ENCODE measurements at regions of chr20 and their contacts with region 1.

Region 1: DNA sequence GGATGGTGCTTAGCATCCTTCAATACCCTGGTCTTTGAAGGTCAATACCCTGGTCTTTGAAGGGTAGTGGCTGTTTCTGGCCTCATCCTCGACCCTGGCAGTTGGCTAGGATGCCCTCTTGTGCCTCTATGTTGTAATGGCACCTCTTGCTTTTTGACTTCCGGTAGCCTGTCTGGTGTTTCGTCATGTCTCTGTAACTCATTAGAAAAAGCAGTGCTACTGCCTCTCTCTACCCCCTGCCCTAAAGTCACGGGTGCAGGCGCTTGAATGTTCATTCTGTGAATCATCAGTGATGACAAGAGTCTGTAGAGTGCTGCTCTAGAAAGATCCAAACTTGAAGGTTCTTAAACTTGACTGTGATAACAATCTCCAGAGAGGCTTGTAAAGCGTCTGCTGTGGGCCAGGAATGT is 28.3 kb downstream of the RSPO4 start:
- DNase-seq: peak in 5 of 9 donors; percentile 13 to 39 (median 26)
- ATAC-seq: peak; percentile 82
- H3K4me3 ChIP-seq: no peak overlapping the region
- H3K4me3 Mint-ChIP-seq: no peak overlapping the region
- H3K27ac ChIP-seq: no peak overlapping the region
- H3K27ac Mint-ChIP-seq: peak overlapping the region in 1 of 9 donors; percentile 37
- H3K4me1 ChIP-seq: no peaks in the 10 kb centered on the region
- H3K4me1 Mint-ChIP-seq: peaks cover 0 to 4% (median 2%) of the 10 kb centered on the region in 7 donors
- H3K27me3 ChIP-seq: no peaks in the 10 kb centered on the region
- H3K27me3 Mint-ChIP-seq: peaks cover 0 to 7% (median 0%) of the 10 kb centered on the region in 5 donors

Region 2: GRCh38 chr20:1108437-1108920 is 134.7 kb after region 1 on chr20:
- CTCF ChIA-PET with region 1: no interaction called
- POLR2A ChIA-PET with region 1: no interaction called
- intact Hi-C with region 1: loop called in 1 of 2 experiments (anchors 10 kb)
- DNase-seq: peak in 8 of 9 donors; percentile 18 to 51 (median 43)
- ATAC-seq: peak; percentile 87
- H3K4me3 ChIP-seq: no peak overlapping the region
- H3K4me3 Mint-ChIP-seq: no peak overlapping the region
- H3K27ac ChIP-seq: no peak overlapping the region
- H3K27ac Mint-ChIP-seq: peak overlapping the region in 1 of 9 donors; percentile 60
- H3K4me1 ChIP-seq: no peaks in the 10 kb centered on the region
- H3K4me1 Mint-ChIP-seq: peaks cover 5 to 7% (median 6%) of the 10 kb centered on the region in 7 donors
- H3K27me3 ChIP-seq: no peaks in the 10 kb centered on the region
- H3K27me3 Mint-ChIP-seq: peaks cover 0 to 10% (median 0%) of the 10 kb centered on the region in 5 donors